Breast epithelium (tissue), 4 donors: ENCODE measurements at regions of chr1 and their contacts with region 1.

Region 1: DNA sequence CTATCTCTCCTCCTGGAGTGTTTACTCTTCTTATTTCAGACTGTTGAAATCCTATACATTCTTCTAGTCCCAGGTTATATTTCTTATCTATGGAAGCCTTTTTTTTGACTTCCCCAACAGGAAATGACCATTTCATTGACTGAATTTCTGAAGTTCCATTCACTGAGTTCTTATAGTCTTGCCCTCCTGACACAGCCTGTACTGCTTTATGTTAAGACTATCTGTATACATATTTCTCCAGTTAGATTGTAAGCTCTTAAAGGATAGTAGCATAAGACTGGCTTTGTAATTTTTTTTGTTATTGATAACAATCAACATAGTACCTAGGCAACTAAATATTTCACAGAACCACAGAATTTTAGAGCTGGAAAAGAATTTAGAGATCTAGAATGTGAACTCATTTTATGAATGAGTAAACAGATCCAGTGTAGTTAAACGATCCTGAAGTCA is 14.9 kb upstream of the MACF1 start:
- DNase-seq: no peak
- H3K4me3 ChIP-seq: no peak overlapping the region
- H3K27ac ChIP-seq: peak overlapping the region in 1 of 2 donors; percentile 93
- H3K4me1 ChIP-seq: peaks cover 5 to 10% of the 10 kb centered on the region in 2 donors
- H3K27me3 ChIP-seq: no peaks in the 10 kb centered on the region
- CTCF ChIP-seq: no peak
- POLR2A ChIP-seq: no peak

Region 2: GRCh38 chr1:39047374-39048229 is 142.0 kb before region 1 on chr1:
- intact Hi-C with region 1: no loop called
- DNase-seq: no peak
- H3K4me3 ChIP-seq: no peak overlapping the region
- H3K27ac ChIP-seq: peak overlapping the region in 1 of 2 donors; percentile 58
- H3K4me1 ChIP-seq: no peaks in the 10 kb centered on the region
- H3K27me3 ChIP-seq: no peaks in the 10 kb centered on the region
- CTCF ChIP-seq: no peak
- POLR2A ChIP-seq: no peak

Region 3: DNA sequence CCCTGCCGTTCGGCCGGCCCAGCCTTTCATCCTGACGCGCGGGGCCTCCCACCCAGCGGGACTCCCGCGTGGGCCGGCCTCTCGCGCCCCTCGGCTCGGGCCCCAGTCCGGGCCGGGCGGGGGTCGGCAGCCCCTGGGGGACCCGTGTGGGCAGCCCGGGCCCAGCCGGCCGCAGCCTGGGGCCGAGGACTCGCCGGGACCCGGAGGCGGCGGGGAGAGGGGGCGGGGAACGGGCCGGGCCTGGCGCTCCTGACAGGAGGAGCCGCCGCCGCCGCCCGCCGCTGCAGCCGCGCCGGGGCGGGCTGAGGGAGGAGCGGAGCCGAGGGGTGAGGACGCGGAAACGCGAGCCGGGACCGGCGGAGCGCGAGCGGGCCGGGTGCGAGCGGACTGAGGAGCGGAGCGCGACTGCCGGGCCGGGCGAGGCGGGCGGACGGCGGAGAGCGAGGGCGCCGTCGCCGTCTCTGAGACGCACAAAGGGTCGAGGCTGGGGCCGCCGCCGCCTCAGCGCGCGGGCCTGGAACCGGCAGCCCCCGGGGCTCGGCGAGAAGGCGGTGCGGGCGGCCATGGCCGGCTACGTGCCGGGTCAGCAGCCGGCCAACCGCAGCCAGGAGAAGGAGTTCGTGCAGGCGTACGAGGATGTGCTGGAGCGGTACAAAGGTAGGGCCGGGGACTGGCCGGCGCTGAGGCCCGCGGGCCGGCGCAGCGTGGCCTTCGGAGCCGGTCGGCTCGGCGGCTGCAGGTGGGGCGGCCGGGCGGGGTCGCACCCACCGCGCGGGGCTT is 84.4 kb before region 1 on chr1:
- intact Hi-C with region 1: loop called (anchors 5 kb)
- DNase-seq: peak; percentile 63 to 75
- H3K4me3 ChIP-seq: peak overlapping the region; percentile 70 to 84 (median 81)
- H3K27ac ChIP-seq: peak overlapping the region; percentile 94 to 97
- H3K4me1 ChIP-seq: peaks cover 0 to 3% of the 10 kb centered on the region in 2 donors
- H3K27me3 ChIP-seq: no peaks in the 10 kb centered on the region
- CTCF ChIP-seq: no peak
- POLR2A ChIP-seq: no peak